MCF 10A (cell line): ENCODE measurements at regions of chr1 and their contacts with region 1.

Region 1: DNA sequence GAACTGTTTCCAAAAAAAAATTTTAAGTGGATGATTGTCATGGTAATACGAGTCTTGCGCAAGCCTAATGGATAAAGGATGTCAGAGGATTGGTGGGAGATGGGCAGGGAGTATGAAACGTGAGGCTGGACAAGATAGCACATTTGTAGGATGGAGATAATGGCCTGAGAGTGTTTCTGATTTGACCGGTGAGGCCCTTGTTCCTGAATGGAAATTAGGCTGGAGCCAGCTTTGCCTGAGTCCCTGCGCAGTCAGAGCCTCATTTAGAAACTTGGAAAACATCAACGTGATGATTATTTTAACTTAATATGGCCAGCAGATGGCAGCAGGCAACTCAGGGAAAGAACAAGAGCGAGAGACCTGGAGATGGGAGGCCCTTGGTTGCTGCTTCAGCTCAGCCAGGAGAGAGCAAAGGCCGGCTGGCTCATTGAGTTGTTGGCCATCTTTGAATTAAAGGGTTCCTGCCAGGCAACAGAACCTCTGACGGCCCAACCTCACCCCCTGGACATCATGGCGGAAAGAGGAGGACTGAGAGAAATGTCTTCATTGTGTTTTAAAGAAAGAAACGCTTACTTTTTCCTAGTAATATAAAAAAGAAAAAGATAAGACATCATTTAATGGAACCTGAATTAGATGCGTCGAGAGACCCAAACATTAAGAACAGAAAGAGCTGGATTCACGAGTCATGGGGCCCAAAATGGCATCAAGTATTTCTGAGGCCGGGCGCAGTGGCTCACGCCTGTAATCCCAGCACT is 80.3 kb downstream of the SELENOF start:
- DNase-seq: peak; percentile 91
- H3K4me3 Mint-ChIP-seq: no peak overlapping the region
- H3K27ac Mint-ChIP-seq: no peak overlapping the region
- H3K4me1 Mint-ChIP-seq: peaks cover 16% of the 10 kb centered on the region
- H3K27me3 Mint-ChIP-seq: no peaks in the 10 kb centered on the region
- CTCF ChIP-seq: peak; percentile 51

Region 2: DNA sequence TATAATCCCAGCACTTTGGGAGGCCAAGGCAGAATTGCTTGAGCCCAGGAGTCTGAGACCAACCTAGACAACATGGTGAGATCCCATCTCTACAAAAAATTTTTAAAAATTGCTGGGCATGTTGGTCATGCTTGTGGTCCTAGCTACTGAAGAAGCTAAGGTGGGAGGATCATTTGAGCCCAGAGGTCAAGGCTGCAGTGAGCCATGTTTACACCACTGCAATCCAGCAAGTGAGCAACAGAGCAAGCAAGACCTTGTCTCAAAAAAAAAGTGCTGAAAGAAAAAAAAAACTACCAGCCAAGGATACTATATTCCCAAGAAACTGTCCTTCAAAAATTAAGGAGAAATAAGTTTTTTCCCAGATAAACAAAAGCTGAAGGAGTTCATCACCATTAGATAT is 51.2 kb before region 1 on chr1:
- CTCF ChIA-PET with region 1: interaction called, 12 read pairs
- POLR2A ChIA-PET with region 1: no interaction called
- intact Hi-C with region 1: loop called (anchors 1 kb)
- DNase-seq: no peak
- H3K4me3 Mint-ChIP-seq: no peak overlapping the region
- H3K27ac Mint-ChIP-seq: no peak overlapping the region
- H3K4me1 Mint-ChIP-seq: peaks cover 31% of the 10 kb centered on the region
- H3K27me3 Mint-ChIP-seq: no peaks in the 10 kb centered on the region
- CTCF ChIP-seq: no peak

Region 3: GRCh38 chr1:86965012-86965826 is 131.6 kb after region 1 on chr1:
- CTCF ChIA-PET with region 1: interaction called, 39 read pairs
- POLR2A ChIA-PET with region 1: interaction called, 6 read pairs
- intact Hi-C with region 1: loop called (anchors 1 kb)
- DNase-seq: peak; percentile 48
- H3K4me3 Mint-ChIP-seq: no peak overlapping the region
- H3K27ac Mint-ChIP-seq: no peak overlapping the region
- H3K4me1 Mint-ChIP-seq: no peaks in the 10 kb centered on the region
- H3K27me3 Mint-ChIP-seq: no peaks in the 10 kb centered on the region
- CTCF ChIP-seq: peak; percentile 74

Region 4: GRCh38 chr1:87024936-87025540 is 191.4 kb after region 1 on chr1:
- CTCF ChIA-PET with region 1: interaction called, 9 read pairs
- POLR2A ChIA-PET with region 1: no interaction called
- intact Hi-C with region 1: loop called (anchors 2 kb)
- DNase-seq: peak; percentile 54
- H3K4me3 Mint-ChIP-seq: no peak overlapping the region
- H3K27ac Mint-ChIP-seq: no peak overlapping the region
- H3K4me1 Mint-ChIP-seq: peaks cover 4% of the 10 kb centered on the region
- H3K27me3 Mint-ChIP-seq: no peaks in the 10 kb centered on the region
- CTCF ChIP-seq: peak; percentile 47